Breast epithelium (tissue), 4 donors: ENCODE measurements at regions of chr2 and their contacts with region 1.

Region 1: DNA sequence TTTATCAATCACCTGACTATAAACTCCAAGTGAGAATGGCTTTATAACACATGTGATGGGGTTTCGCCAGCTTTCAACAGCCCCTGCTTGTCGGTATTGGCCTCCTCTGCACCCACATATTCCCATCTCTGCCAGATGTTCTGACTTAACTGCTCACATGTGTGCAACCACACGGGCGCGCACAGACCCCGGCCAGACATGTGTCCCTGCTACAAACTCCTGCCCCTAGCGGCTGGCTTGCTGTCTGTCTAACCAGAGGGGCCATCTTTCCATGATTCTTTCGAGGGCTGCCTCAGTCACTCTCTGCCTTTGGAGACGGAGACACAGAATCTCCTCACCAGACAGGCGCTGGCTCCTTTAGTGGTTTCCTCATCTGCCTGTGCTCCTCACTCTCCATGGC is 15.3 kb downstream of the STON1 start:
- DNase-seq: no peak
- H3K4me3 ChIP-seq: no peak overlapping the region
- H3K27ac ChIP-seq: peak overlapping the region; percentile 29 to 64
- H3K4me1 ChIP-seq: no peaks in the 10 kb centered on the region
- H3K27me3 ChIP-seq: no peaks in the 10 kb centered on the region
- CTCF ChIP-seq: no peak
- POLR2A ChIP-seq: no peak

Region 2: GRCh38 chr2:48799601-48800000 is 254.4 kb after region 1 on chr2:
- intact Hi-C with region 1: loop called (anchors 5 kb)
- DNase-seq: no peak
- H3K4me3 ChIP-seq: no peak overlapping the region
- H3K27ac ChIP-seq: no peak overlapping the region
- H3K4me1 ChIP-seq: no peaks in the 10 kb centered on the region
- H3K27me3 ChIP-seq: no peaks in the 10 kb centered on the region
- CTCF ChIP-seq: no peak
- POLR2A ChIP-seq: no peak